Activated naive CD4-positive, alpha-beta T cell treated with anti-CD3 and anti-CD28 coated beads for 36 hours (primary cell): ENCODE measurements at regions of chr4 and their contacts with region 1.

Region 1: GRCh38 chr4:15778289-15779241 is at the start of gene CD38:
- DNase-seq: peak; percentile 71
- H3K4me3 Mint-ChIP-seq: peak within 1 kb of the TSS; percentile 87
- H3K27ac Mint-ChIP-seq: peak within 1 kb of the TSS; percentile 88
- H3K4me1 Mint-ChIP-seq: peaks cover 63% of the 10 kb centered on the region
- H3K27me3 Mint-ChIP-seq: peaks cover 6% of the 10 kb centered on the region
- total RNA-seq, gene CD38: 18.5 to 20.0 TPM

Region 2: DNA sequence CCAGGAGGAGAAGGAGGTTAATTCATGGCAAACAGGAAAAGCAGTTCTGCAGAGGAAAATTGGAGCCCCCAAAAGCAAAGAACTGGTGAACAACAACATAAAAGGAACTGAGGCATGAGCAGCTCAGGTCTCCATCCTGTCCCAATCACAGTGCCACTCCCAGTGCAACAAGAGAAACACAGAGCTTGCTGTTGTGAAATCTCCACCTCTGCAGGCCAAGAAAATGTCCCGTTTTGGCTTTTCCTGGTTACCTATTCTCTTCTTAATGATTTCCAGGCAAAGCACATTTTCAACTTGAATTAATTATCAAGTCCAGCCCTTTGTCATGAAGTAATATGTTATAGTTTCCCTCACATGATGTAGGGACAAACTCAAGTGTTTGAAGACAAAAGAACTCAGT is 350.0 kb before region 1 on chr4:
- CTCF ChIA-PET with region 1: no interaction called
- intact Hi-C with region 1: no loop called
- DNase-seq: no peak
- H3K4me3 Mint-ChIP-seq: no peak overlapping the region
- H3K27ac Mint-ChIP-seq: no peak overlapping the region
- H3K4me1 Mint-ChIP-seq: peaks cover 25% of the 10 kb centered on the region
- H3K27me3 Mint-ChIP-seq: no peaks in the 10 kb centered on the region

Region 3: DNA sequence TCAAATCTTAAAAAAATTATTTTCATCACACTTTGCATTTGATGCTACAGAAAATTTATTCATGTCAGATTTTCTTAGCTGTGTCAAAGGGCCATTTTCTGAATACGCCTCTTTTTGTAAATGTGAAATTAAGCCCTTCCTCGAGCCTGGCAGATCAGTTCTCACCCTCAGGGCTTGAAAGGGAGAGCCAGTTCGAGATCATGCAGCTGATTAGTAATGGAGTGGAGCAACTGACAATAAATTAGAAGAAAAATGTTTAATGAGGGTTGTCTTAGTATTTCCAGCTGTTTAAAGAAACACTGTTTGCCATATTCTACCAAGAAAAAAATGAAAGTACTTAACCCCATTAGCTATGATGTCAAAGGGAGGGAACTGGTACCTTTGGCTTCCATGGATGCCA is 280.2 kb before region 1 on chr4:
- CTCF ChIA-PET with region 1: no interaction called
- intact Hi-C with region 1: no loop called
- DNase-seq: no peak
- H3K4me3 Mint-ChIP-seq: no peak overlapping the region
- H3K27ac Mint-ChIP-seq: no peak overlapping the region
- H3K4me1 Mint-ChIP-seq: no peaks in the 10 kb centered on the region
- H3K27me3 Mint-ChIP-seq: no peaks in the 10 kb centered on the region

Region 4: DNA sequence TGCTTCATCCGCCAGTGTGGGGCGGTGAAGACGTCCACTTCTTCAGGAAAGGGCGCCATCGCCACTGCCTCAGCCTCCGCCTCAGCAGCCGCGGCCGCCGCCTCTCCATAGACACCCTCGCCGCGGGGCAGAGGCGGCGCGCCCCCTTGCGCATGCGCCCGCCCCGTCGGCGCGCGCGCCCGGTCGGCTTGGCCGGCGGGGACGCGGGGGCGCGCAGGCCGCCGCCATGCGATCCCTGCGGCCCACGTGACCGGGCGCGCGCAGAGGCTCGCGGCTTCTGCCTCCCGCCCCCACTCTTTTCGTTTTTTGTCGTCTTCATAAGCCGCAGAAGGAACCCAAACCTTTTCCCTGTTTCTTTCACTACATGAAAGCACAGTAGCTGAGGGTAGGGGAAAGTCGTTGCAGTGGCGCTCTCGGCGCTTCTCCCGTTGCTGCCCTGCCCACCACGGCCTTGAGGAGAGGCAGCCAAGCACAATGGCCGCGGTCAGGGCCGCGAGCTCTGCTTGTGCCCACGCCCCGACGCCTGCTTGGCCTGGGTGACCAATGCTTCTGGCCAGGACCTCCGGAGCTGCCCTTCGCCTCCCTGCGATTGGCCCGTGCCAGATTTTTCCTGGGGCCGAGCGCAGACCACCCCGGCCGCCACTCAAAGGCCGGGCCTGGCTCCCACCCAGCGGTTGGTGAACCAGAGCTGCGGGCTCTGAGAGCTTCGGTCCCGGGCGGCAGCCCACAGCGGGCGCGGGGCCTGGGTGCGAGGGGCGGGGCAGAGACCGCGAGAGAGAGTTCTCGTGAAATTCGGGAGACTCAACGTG is 123.1 kb before region 1 on chr4 and contains the start of gene FBXL5:
- CTCF ChIA-PET with region 1: no interaction called
- intact Hi-C with region 1: loop called (anchors 1 kb)
- DNase-seq: peak; percentile 79
- H3K4me3 Mint-ChIP-seq: peak within 1 kb of the TSS; percentile 99
- H3K27ac Mint-ChIP-seq: peak within 1 kb of the TSS; percentile 96
- H3K4me1 Mint-ChIP-seq: peaks cover 68% of the 10 kb centered on the region
- H3K27me3 Mint-ChIP-seq: no peaks in the 10 kb centered on the region
- total RNA-seq, gene FBXL5: 30.8 to 31.0 TPM

Region 5: DNA sequence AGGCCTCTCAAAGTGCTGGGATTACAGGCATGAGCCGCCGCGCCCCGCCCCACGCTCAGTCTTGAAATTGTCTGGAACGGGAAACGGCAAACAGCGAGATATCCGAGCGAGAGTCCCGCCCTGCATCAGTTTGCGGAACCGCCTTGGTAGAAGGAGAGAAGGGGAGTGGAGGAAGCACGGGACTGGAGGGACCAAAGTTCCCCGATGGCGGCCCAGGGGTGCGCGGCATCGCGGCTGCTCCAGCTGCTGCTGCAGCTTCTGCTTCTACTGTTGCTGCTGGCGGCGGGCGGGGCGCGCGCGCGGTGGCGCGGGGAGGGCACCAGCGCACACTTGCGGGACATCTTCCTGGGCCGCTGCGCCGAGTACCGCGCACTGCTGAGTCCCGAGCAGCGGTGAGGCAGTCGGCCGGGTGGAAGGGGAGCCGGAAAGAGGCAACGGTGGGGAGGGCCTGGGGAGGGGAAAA is 75.6 kb before region 1 on chr4 and contains the start of gene BST1:
- CTCF ChIA-PET with region 1: no interaction called
- intact Hi-C with region 1: loop called (anchors 2 kb)
- DNase-seq: peak; percentile 80
- H3K4me3 Mint-ChIP-seq: peak within 1 kb of the TSS; percentile 82
- H3K27ac Mint-ChIP-seq: no peak within 1 kb of the TSS
- H3K4me1 Mint-ChIP-seq: peaks cover 12% of the 10 kb centered on the region
- H3K27me3 Mint-ChIP-seq: peaks cover 15% of the 10 kb centered on the region
- total RNA-seq, gene BST1: 0.74 to 0.96 TPM

Region 6: DNA sequence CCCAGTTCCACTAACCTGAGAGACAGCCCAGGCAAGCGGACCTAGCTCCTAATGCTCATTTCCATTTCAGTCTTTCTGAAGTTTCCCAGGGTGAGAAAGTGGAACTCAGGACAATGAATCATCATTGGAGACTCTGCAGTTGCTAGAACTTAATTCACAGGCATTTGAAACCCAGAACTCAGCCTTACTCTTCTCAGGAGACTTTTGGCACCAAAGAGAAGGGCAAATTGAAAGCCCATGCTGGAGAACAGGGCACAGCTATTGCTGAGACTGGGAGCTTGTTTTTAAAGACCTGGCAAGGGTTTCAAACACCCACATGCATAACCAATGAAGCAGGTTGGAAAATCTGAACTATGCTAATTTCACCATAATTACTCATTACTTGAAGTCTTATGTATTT is 39.7 kb before region 1 on chr4:
- CTCF ChIA-PET with region 1: interaction called, 9 read pairs
- intact Hi-C with region 1: loop called (anchors 2 kb)
- DNase-seq: peak; percentile 25
- H3K4me3 Mint-ChIP-seq: no peak overlapping the region
- H3K27ac Mint-ChIP-seq: no peak overlapping the region
- H3K4me1 Mint-ChIP-seq: peaks cover 44% of the 10 kb centered on the region
- H3K27me3 Mint-ChIP-seq: no peaks in the 10 kb centered on the region

Region 7: GRCh38 chr4:15765910-15766697 is 12.5 kb before region 1 on chr4:
- CTCF ChIA-PET with region 1: interaction called, 7 read pairs
- intact Hi-C with region 1: loop called (anchors 1 kb)
- DNase-seq: peak; percentile 75
- H3K4me3 Mint-ChIP-seq: no peak overlapping the region
- H3K27ac Mint-ChIP-seq: peak overlapping the region; percentile 50
- H3K4me1 Mint-ChIP-seq: peaks cover 56% of the 10 kb centered on the region
- H3K27me3 Mint-ChIP-seq: no peaks in the 10 kb centered on the region

Region 8: DNA sequence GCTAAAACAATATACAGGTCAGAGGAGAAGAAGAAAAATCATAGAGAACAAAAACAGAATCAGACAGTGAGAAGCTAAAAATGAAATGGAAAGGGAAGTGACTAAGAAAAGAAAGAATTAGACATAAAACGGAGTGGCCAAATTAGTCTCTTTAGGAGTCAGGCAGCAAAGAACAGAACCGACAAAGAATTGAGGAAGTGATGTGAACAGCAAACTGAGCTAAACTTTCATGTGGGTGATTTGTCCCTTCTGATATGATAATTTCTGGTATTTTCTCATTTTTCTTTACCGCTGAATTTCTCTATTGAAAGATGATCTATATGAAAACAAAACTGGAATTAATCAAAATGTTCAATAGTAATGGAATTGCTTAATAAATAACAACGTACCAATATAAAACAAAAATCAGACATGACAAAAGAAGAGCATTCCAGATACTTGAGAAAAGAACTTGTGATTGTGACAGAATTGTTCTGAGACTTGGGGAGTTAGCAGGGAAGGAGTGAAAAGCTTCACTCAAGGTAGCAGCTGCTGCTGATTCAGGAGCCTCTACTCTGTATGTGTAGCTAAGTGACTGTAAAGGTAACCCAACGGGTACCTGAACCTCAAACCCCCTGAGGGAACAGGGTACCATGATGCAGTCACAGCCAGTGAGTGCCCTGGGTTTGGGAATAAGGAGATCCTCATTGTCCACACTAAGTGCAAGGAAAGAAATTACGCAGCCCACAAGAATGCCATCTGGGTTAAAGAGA is 438.9 kb after region 1 on chr4:
- CTCF ChIA-PET with region 1: no interaction called
- intact Hi-C with region 1: loop called (anchors 5 kb)
- DNase-seq: peak; percentile 10
- H3K4me3 Mint-ChIP-seq: peak overlapping the region; percentile 13
- H3K27ac Mint-ChIP-seq: peak overlapping the region; percentile 74
- H3K4me1 Mint-ChIP-seq: peaks cover 75% of the 10 kb centered on the region
- H3K27me3 Mint-ChIP-seq: no peaks in the 10 kb centered on the region